HCT116 (cell line): ENCODE measurements at regions of chr6 and their contacts with region 1.

Region 1: GRCh38 chr6:163427498-163428254 is 13.2 kb downstream of the QKI start:
- DNase-seq: peak; percentile 16
- ATAC-seq: no peak
- H3K4me3 ChIP-seq: no peak overlapping the region
- H3K27ac ChIP-seq: no peak overlapping the region
- H3K4me1 ChIP-seq: no peaks in the 10 kb centered on the region
- H3K27me3 ChIP-seq: no peaks in the 10 kb centered on the region
- CTCF ChIP-seq: peak in 1 of 3 experiments; percentile 22; a peak in 2 of 6 replicates
- POLR2A ChIP-seq: no peak
- RAD21 ChIP-seq: peak; percentile 55

Region 2: GRCh38 chr6:163554663-163555062 is 127.0 kb after region 1 on chr6:
- CTCF ChIA-PET with region 1: no interaction called
- POLR2A ChIA-PET with region 1: no interaction called
- RAD21 ChIA-PET with region 1: no interaction called
- intact Hi-C with region 1: loop called (anchors 10 kb)
- DNase-seq: no peak
- ATAC-seq: peak; percentile 60; the same call in 1 of the 2 replicates
- H3K4me3 ChIP-seq: no peak overlapping the region
- H3K27ac ChIP-seq: no peak overlapping the region
- H3K4me1 ChIP-seq: no peaks in the 10 kb centered on the region
- H3K27me3 ChIP-seq: no peaks in the 10 kb centered on the region
- CTCF ChIP-seq: peak; percentile 27 to 61 (median 52); a peak in 4 of 6 replicates
- POLR2A ChIP-seq: no peak
- RAD21 ChIP-seq: peak; percentile 58

Region 3: DNA sequence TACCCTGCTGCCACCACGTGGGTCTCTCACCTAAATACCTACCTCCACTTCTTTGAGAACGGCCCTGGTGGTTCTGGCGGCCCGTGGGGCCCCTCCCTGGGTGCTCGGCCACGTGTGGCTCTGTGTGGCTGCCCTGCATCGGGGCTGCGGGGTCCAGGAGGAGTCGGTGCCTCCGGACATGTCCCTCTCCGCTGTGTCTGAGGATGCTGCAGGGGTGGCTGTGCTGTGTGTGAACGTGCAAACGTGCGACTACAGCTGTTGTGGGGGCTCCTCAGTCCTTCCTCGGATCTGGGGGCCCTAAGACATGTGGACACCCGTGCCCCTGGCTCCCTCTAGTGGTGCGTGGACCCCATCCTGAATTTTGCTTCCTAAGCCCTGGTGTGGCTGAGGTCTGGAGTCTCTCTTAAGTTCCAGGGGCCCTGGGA is 678.7 kb after region 1 on chr6:
- CTCF ChIA-PET with region 1: no interaction called
- POLR2A ChIA-PET with region 1: no interaction called
- RAD21 ChIA-PET with region 1: no interaction called
- intact Hi-C with region 1: loop called (anchors 5 kb)
- DNase-seq: no peak
- ATAC-seq: peak; percentile 69
- H3K4me3 ChIP-seq: no peak overlapping the region
- H3K27ac ChIP-seq: no peak overlapping the region
- H3K4me1 ChIP-seq: no peaks in the 10 kb centered on the region; a peak in 1 of 4 replicates
- H3K27me3 ChIP-seq: no peaks in the 10 kb centered on the region
- CTCF ChIP-seq: peak; percentile 8 to 43 (median 40); a peak in 4 of 6 replicates
- POLR2A ChIP-seq: no peak
- RAD21 ChIP-seq: peak; percentile 43; the same call in 1 of the 2 replicates

Region 4: DNA sequence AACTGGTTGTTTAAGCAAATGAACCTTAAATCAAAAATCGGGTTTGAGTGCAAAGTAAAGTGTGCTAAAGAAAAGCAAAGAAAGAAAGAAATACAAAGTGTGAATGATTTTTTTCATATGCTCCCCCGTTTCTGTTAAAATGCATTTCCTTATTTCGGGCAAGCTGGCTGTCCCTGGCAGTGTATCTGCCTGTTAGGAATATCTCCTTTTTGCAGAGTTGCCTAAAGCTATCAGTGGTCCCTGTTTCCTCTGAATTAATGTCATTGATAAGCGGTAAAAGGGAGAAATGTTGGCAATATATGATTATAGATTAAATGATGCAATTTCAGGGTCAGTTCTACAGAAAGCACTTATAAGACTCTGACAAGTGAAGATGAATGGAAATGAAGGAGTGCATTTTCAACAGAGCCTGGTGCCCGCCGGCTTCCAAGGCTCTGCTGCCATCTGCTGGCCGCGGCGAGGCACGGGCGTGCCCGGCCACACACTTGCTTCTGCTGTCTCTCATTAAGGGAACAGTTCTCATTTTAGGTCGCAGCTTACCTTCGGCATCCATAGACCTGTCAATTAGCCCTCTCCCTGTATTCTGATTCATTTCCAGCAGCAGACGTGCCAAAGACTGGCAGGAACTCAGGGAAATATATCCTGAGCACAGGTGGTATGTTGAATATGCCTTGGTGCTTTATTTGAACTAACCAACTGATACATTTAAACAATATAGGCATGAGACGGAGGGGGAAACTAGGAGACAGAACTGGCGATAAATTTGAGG is 1499.8 kb after region 1 on chr6:
- CTCF ChIA-PET with region 1: no interaction called
- POLR2A ChIA-PET with region 1: no interaction called
- RAD21 ChIA-PET with region 1: no interaction called
- intact Hi-C with region 1: loop called (anchors 5 kb)
- DNase-seq: peak; percentile 1
- ATAC-seq: peak; percentile 85
- H3K4me3 ChIP-seq: no peak overlapping the region
- H3K27ac ChIP-seq: no peak overlapping the region
- H3K4me1 ChIP-seq: no peaks in the 10 kb centered on the region
- H3K27me3 ChIP-seq: no peaks in the 10 kb centered on the region
- CTCF ChIP-seq: peak; percentile 28 to 87 (median 83); a peak in 5 of 6 replicates
- POLR2A ChIP-seq: no peak
- RAD21 ChIP-seq: peak; percentile 75